Spleen (tissue), 13 donors: ENCODE measurements at regions of chr5 and their contacts with region 1.

Region 1: DNA sequence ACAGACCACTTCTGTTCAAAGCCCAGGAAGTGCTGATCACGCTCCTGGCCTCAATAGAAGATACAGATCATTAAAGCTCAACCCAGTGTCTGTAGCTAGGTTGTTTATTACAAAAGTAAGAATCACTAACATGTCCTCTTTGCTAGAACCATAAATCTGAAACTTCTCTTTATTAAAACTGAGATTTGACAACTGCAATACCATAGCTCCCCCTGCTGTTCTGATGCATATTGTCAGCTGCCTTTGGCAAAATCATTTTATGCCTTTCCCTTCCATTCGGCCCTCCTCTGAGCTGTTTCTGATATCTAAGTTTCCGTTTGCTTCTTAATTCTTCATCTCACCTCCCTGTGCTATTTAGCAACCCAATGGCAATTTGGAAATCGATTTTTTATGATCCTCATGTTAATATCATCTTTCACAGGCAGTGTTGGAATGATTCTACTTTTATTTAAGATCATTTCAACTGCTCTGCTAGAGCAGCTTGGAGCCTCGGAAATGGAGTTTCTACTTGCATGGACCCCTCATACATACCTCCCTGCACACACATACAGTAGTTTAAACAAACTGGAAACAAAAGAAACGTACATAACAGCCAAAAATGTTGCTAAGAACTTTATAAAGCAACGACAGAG is 998.8 kb downstream of the MAT2B start:
- DNase-seq: no peak
- H3K4me3 ChIP-seq: no peak overlapping the region
- H3K27ac ChIP-seq: no peak overlapping the region
- H3K4me1 ChIP-seq: peaks cover 0 to 3% (median 0%) of the 10 kb centered on the region in 6 donors
- H3K27me3 ChIP-seq: no peaks in the 10 kb centered on the region
- CTCF ChIP-seq: peak; percentile 50 to 80 (median 71)
- POLR2A ChIP-seq: no peak

Region 2: DNA sequence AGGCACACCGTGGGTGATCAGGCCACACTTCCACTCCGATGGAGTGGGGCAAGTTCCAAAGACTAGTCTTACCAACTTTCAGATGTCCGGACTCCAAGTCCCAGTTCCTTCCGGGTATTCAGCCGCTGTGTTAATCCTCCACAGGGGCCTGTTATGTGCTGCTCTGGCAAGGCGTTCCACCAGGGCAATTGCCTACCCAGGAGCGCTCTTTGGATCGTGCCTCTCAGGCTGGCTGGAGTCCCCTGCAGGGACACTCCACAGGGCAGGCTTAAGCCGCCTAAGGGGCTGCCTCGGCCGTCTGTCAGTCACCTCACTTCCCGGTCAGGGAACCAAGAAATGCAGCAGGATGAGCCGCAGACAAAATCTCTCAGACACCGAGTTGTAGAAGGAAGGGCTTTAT is 1185.5 kb before region 1 on chr5:
- intact Hi-C with region 1: no loop called
- DNase-seq: no peak
- H3K4me3 ChIP-seq: no peak overlapping the region
- H3K27ac ChIP-seq: no peak overlapping the region
- H3K4me1 ChIP-seq: no peaks in the 10 kb centered on the region
- H3K27me3 ChIP-seq: no peaks in the 10 kb centered on the region
- CTCF ChIP-seq: no peak
- POLR2A ChIP-seq: no peak

Region 3: GRCh38 chr5:163695830-163696578 is 808.3 kb before region 1 on chr5:
- intact Hi-C with region 1: loop called (anchors 5 kb)
- DNase-seq: no peak
- H3K4me3 ChIP-seq: no peak overlapping the region
- H3K27ac ChIP-seq: no peak overlapping the region
- H3K4me1 ChIP-seq: peaks cover 0 to 5% (median 0%) of the 10 kb centered on the region in 6 donors
- H3K27me3 ChIP-seq: no peaks in the 10 kb centered on the region
- CTCF ChIP-seq: peak in 10 of 11 experiments; percentile 12 to 65 (median 54)
- POLR2A ChIP-seq: no peak

Region 4: DNA sequence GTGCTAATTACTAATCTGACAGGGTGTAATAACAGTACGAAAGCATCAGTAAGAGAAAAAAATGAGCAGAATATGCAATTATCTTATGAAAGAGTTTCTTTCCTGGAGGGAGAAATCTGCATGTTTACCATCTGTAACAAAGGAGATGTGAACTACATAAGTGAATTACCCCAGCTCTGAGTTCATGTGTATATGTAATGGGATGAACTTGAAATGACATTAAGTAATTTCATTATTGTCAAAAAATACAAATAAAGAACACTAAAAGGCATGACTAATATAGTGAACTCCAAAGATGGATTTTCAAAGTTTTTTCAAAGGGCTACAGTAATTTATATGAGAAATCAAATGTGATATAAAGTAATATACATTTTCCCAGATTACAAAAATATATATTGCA is 54.8 kb before region 1 on chr5:
- intact Hi-C with region 1: no loop called
- DNase-seq: no peak
- H3K4me3 ChIP-seq: no peak overlapping the region
- H3K27ac ChIP-seq: no peak overlapping the region
- H3K4me1 ChIP-seq: no peaks in the 10 kb centered on the region
- H3K27me3 ChIP-seq: no peaks in the 10 kb centered on the region
- CTCF ChIP-seq: no peak
- POLR2A ChIP-seq: no peak

Region 5: GRCh38 chr5:164470312-164470711 is 33.9 kb before region 1 on chr5:
- intact Hi-C with region 1: no loop called
- DNase-seq: no peak
- H3K4me3 ChIP-seq: no peak overlapping the region
- H3K27ac ChIP-seq: no peak overlapping the region
- H3K4me1 ChIP-seq: no peaks in the 10 kb centered on the region
- H3K27me3 ChIP-seq: no peaks in the 10 kb centered on the region
- CTCF ChIP-seq: no peak
- POLR2A ChIP-seq: no peak

Region 6: GRCh38 chr5:164784230-164784629 is 280.0 kb after region 1 on chr5:
- intact Hi-C with region 1: no loop called
- DNase-seq: no peak
- H3K4me3 ChIP-seq: no peak overlapping the region
- H3K27ac ChIP-seq: no peak overlapping the region
- H3K4me1 ChIP-seq: no peaks in the 10 kb centered on the region
- H3K27me3 ChIP-seq: no peaks in the 10 kb centered on the region
- CTCF ChIP-seq: no peak
- POLR2A ChIP-seq: no peak